ENCODE measurements at regions of chr10 and their contacts with region 1.

Region 1: GRCh38 chr10:62610649-62611229 is 193.8 kb upstream of the ADO start:
- DNase-seq: peak; percentile 87
- ATAC-seq: peak; percentile 97
- H3K4me3 ChIP-seq: no peak overlapping the region
- H3K4me3 Mint-ChIP-seq: no peak overlapping the region
- H3K27ac ChIP-seq: no peak overlapping the region
- H3K27ac Mint-ChIP-seq: no peak overlapping the region
- H3K4me1 ChIP-seq: peaks cover 5% of the 10 kb centered on the region in 2 donors
- H3K4me1 Mint-ChIP-seq: peaks cover 12% of the 10 kb centered on the region
- H3K27me3 ChIP-seq: no peaks in the 10 kb centered on the region
- H3K27me3 Mint-ChIP-seq: no peaks in the 10 kb centered on the region
- CTCF ChIP-seq: peak; percentile 86

Region 2: DNA sequence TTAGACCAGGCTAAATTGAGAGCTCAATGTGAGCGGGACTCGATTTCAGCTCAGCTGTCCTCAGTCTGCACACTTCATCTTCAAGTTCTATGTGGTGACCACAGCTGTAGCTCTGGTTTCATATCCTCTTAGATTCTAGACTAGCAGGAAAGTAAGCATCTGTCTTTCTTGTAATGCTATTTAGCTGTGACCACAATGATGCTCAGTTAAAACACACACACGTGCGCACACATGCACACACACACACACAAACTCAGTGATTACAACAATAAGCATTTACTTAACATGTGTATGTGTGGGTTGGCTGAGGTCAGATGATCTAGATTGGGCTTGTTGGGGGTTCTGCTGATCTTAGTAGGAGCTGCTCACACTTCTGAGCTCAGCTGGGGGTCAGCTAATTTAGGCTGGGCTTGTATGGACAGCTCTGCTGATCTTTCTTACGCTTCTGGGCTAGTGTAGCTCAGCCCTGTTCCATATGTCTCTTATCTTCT is 154.1 kb before region 1 on chr10:
- CTCF ChIA-PET with region 1: no interaction called
- POLR2A ChIA-PET with region 1: no interaction called
- intact Hi-C with region 1: no loop called
- DNase-seq: peak; percentile 85
- ATAC-seq: peak; percentile 93
- H3K4me3 ChIP-seq: no peak overlapping the region
- H3K4me3 Mint-ChIP-seq: peak overlapping the region; percentile 63
- H3K27ac ChIP-seq: peak overlapping the region in 1 of 2 donors; percentile 1
- H3K27ac Mint-ChIP-seq: peak overlapping the region; percentile 86
- H3K4me1 ChIP-seq: peaks cover 30 to 33% of the 10 kb centered on the region in 2 donors
- H3K4me1 Mint-ChIP-seq: peaks cover 34% of the 10 kb centered on the region
- H3K27me3 ChIP-seq: no peaks in the 10 kb centered on the region
- H3K27me3 Mint-ChIP-seq: no peaks in the 10 kb centered on the region
- CTCF ChIP-seq: no peak

Region 3: DNA sequence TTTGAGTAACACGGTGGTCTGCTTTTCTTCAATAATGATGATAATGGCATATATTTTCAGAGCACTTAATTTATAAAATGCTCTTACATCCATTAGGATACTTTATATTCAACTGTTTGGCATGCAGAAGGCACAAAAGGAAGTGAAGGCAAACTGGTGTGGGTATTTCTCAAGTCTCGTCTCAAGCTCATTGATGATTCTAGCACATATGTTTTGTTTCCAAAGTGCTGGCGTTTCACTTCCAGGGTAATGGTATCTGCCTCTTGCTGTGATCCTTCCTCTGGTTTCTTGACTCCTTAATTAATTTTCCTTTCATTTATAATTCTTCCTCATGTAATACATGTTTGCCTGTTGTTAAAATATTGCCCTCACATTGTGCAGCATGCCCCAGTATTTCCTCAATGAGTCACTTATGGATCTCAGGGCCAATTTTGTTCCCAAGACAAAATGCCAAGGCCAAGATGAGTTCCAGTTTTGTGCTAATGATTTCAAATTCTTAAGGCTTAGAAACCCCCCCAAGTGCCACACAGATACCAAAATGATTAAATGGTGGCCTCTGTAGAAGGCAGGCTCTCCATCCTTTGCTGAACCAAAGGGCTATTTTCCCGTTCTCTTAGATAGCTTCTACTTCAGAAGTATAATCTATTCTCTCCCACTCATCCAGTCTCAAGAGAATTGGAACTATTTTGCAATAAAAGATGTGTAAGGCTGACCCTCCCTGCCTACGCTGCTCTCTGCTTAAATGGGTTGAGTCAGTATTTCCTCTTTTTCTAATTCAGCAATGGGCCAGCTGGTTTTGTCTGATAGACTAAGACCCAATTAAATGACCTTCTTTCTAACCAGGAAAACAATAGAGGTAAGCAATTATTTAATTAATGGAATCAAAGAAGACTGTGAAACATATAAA is 65.3 kb before region 1 on chr10:
- CTCF ChIA-PET with region 1: no interaction called
- POLR2A ChIA-PET with region 1: no interaction called
- intact Hi-C with region 1: no loop called
- DNase-seq: no peak
- ATAC-seq: peak; percentile 21
- H3K4me3 ChIP-seq: no peak overlapping the region
- H3K4me3 Mint-ChIP-seq: peak overlapping the region; percentile 0
- H3K27ac ChIP-seq: no peak overlapping the region
- H3K27ac Mint-ChIP-seq: peak overlapping the region; percentile 46
- H3K4me1 ChIP-seq: peaks cover 39 to 43% of the 10 kb centered on the region in 2 donors
- H3K4me1 Mint-ChIP-seq: peaks cover 61% of the 10 kb centered on the region
- H3K27me3 ChIP-seq: no peaks in the 10 kb centered on the region
- H3K27me3 Mint-ChIP-seq: no peaks in the 10 kb centered on the region
- CTCF ChIP-seq: no peak

Region 4: DNA sequence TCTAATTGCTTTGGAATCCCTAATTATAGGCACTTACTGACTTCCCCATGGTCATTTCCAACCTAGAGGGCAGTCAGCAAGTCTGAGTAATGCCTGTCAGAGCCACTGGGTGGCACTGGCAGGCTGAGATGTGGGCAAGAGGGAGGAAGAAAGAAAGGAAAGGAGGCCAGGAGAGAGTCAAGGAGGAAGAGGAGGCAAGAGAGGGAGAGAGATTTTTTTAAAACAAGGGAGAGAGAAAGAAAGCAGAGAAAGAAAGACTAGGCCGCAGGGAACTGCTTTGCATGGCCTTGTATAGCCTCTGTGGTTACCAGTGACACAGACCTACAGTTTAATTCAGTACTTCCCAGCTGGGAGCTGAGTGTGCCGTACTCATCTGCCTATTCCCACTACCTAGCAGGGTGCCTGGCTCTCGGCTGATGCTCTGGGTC is 16.6 kb before region 1 on chr10:
- CTCF ChIA-PET with region 1: interaction called, 33 read pairs
- POLR2A ChIA-PET with region 1: no interaction called
- intact Hi-C with region 1: no loop called
- DNase-seq: peak; percentile 74
- ATAC-seq: peak; percentile 89
- H3K4me3 ChIP-seq: no peak overlapping the region
- H3K4me3 Mint-ChIP-seq: no peak overlapping the region
- H3K27ac ChIP-seq: no peak overlapping the region
- H3K27ac Mint-ChIP-seq: no peak overlapping the region
- H3K4me1 ChIP-seq: peaks cover 7 to 10% of the 10 kb centered on the region in 2 donors
- H3K4me1 Mint-ChIP-seq: peaks cover 7% of the 10 kb centered on the region
- H3K27me3 ChIP-seq: no peaks in the 10 kb centered on the region
- H3K27me3 Mint-ChIP-seq: no peaks in the 10 kb centered on the region
- CTCF ChIP-seq: peak; percentile 88

Region 5: DNA sequence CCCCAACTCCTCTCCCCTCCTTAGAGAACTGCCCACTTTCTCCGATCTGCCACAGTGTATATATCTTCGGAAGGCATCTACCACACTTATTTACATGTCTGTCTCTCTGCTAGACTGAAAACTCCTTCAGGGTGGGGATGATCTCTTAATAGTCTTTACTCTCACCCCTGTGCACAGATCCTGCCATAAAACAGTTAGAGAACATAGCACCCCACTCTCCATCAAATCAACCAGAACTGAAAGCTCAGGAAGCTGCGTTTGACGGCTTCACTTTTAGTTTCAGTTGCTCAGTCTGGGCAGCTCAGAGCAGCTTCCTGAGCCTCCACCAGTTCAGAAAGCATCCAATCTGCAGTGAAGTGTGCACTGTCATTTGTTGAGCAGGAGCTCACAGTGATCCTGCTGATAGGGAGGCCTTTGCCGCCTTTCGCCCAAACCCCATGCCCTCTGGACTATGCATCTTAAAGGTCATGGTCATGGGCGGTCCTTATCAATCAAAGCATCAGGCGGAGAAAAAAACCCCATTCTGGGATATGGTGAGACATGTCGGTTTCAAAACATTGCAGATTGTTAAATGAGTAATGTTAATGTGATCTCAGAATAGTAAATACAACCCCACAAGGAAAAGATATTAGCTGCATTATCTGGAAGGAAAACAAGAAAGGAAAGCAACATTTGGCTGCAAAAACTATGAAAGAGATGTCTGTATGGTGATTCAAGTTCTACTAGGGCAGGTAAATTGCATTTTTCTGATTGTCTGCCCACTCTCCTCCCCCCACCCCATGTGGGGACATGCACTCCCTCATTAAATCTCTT is 26.7 kb after region 1 on chr10:
- CTCF ChIA-PET with region 1: interaction called, 13 read pairs
- POLR2A ChIA-PET with region 1: no interaction called
- intact Hi-C with region 1: loop called (anchors 2 kb)
- DNase-seq: peak; percentile 76
- ATAC-seq: peak; percentile 65
- H3K4me3 ChIP-seq: peak overlapping the region; percentile 16 to 72 (median 52)
- H3K4me3 Mint-ChIP-seq: no peak overlapping the region
- H3K27ac ChIP-seq: peak overlapping the region; percentile 66 to 78
- H3K27ac Mint-ChIP-seq: no peak overlapping the region
- H3K4me1 ChIP-seq: peaks cover 65 to 72% of the 10 kb centered on the region in 2 donors
- H3K4me1 Mint-ChIP-seq: peaks cover 36% of the 10 kb centered on the region
- H3K27me3 ChIP-seq: no peaks in the 10 kb centered on the region
- H3K27me3 Mint-ChIP-seq: no peaks in the 10 kb centered on the region
- CTCF ChIP-seq: no peak

Region 6: GRCh38 chr10:62689712-62690111 is 79.0 kb after region 1 on chr10:
- CTCF ChIA-PET with region 1: no interaction called
- POLR2A ChIA-PET with region 1: no interaction called
- intact Hi-C with region 1: no loop called
- DNase-seq: peak; percentile 73
- ATAC-seq: peak; percentile 73
- H3K4me3 ChIP-seq: peak overlapping the region in 2 of 5 experiments; percentile 22
- H3K4me3 Mint-ChIP-seq: peak overlapping the region; percentile 80
- H3K27ac ChIP-seq: peak overlapping the region; percentile 4 to 66
- H3K27ac Mint-ChIP-seq: peak overlapping the region; percentile 83
- H3K4me1 ChIP-seq: peaks cover 35 to 37% of the 10 kb centered on the region in 2 donors
- H3K4me1 Mint-ChIP-seq: peaks cover 36% of the 10 kb centered on the region
- H3K27me3 ChIP-seq: no peaks in the 10 kb centered on the region
- H3K27me3 Mint-ChIP-seq: no peaks in the 10 kb centered on the region
- CTCF ChIP-seq: no peak

Region 7: DNA sequence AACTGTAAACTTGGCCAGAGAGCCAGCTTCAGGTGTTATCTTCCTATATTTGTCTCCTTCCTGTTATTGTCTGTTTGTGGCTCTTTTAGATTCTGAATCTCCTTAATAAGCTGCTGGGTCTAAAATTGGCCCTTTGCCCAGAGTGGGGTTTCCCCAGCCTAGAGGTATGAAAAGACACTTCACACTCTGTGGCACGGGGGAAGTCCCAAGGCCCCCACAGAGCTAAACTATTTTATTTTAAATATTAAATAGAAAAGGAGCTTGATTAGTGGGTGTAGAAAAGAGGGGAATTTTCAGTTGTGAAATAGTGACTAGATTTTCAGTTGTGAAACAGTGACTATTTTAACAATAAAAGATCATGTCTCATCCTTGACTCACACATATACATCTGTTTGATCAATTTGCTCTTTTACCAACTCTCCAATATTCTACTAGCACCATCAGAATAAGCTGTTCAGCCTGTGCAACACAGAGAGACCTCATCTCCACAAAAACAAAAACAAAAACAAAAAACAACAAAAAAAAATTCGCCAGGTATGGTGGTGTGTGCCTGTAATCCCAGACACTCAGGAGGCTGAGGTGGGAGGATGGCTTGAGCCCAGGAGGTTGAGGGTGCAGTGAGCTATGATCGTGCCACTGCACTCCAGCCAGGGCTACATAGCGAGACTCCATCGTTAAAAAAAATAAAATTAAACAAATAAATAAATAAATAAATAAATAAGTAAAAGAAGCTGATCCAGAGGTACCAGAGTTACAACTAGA is 168.9 kb after region 1 on chr10:
- CTCF ChIA-PET with region 1: interaction called, 11 read pairs
- POLR2A ChIA-PET with region 1: no interaction called
- intact Hi-C with region 1: no loop called
- DNase-seq: peak; percentile 91
- ATAC-seq: peak; percentile 99
- H3K4me3 ChIP-seq: peak overlapping the region in 1 of 5 experiments; percentile 21
- H3K4me3 Mint-ChIP-seq: peak overlapping the region; percentile 35
- H3K27ac ChIP-seq: peak overlapping the region; percentile 38 to 60
- H3K27ac Mint-ChIP-seq: peak overlapping the region; percentile 47
- H3K4me1 ChIP-seq: peaks cover 25 to 27% of the 10 kb centered on the region in 2 donors
- H3K4me1 Mint-ChIP-seq: peaks cover 33% of the 10 kb centered on the region
- H3K27me3 ChIP-seq: no peaks in the 10 kb centered on the region
- H3K27me3 Mint-ChIP-seq: no peaks in the 10 kb centered on the region
- CTCF ChIP-seq: no peak

Region 8: DNA sequence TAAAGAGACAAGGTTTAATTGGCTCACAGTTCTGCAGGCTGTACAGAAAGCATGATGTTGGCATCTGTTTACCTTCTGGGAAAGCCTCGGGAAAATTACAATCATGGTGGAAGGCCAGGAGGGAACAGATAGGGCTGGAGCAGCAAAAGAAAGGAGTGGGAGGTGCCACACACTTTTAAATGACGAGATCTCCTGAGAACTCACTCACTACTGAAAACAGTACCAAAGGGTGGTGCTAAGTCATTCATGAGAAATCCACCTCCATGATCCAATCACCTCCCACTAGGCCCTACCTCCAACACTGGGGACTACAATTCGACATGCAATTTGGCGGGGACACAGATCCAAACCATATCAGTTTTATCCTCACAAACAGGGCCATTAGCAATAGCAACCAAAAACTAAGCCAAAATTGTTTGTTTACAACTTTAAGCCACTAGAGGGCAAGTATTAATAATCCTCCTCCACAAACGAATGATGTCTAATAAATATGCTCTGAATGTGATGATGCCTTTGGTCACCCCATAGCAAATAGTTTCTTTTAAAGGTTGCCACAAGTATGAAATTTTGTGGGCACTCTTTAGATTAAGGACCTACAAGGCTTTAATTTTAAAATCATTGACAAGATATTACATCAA is 393.2 kb after region 1 on chr10:
- CTCF ChIA-PET with region 1: interaction called, 3 read pairs
- POLR2A ChIA-PET with region 1: no interaction called
- intact Hi-C with region 1: loop called (anchors 1 kb)
- DNase-seq: peak; percentile 14
- ATAC-seq: no peak
- H3K4me3 ChIP-seq: no peak overlapping the region
- H3K4me3 Mint-ChIP-seq: no peak overlapping the region
- H3K27ac ChIP-seq: no peak overlapping the region
- H3K27ac Mint-ChIP-seq: no peak overlapping the region
- H3K4me1 ChIP-seq: no peaks in the 10 kb centered on the region
- H3K4me1 Mint-ChIP-seq: no peaks in the 10 kb centered on the region
- H3K27me3 ChIP-seq: no peaks in the 10 kb centered on the region
- H3K27me3 Mint-ChIP-seq: peaks cover 9% of the 10 kb centered on the region
- CTCF ChIP-seq: peak; percentile 60

Region 9: GRCh38 chr10:63157845-63158624 is 547.3 kb after region 1 on chr10:
- CTCF ChIA-PET with region 1: interaction called, 19 read pairs
- POLR2A ChIA-PET with region 1: no interaction called
- intact Hi-C with region 1: loop called (anchors 1 kb)
- DNase-seq: peak; percentile 85
- ATAC-seq: peak; percentile 68
- H3K4me3 ChIP-seq: no peak overlapping the region
- H3K4me3 Mint-ChIP-seq: no peak overlapping the region
- H3K27ac ChIP-seq: no peak overlapping the region
- H3K27ac Mint-ChIP-seq: no peak overlapping the region
- H3K4me1 ChIP-seq: no peaks in the 10 kb centered on the region
- H3K4me1 Mint-ChIP-seq: peaks cover 9% of the 10 kb centered on the region
- H3K27me3 ChIP-seq: no peaks in the 10 kb centered on the region
- H3K27me3 Mint-ChIP-seq: no peaks in the 10 kb centered on the region
- CTCF ChIP-seq: peak; percentile 90